Thyroid gland (tissue), 4 donors: ENCODE measurements at regions of chr17 and their contacts with region 1.

Region 1: GRCh38 chr17:879549-880442 is 97.6 kb downstream of the MRM3 start:
- DNase-seq: peak; percentile 95 to 97
- H3K4me3 ChIP-seq: no peak overlapping the region
- H3K27ac ChIP-seq: peak overlapping the region; percentile 10 to 84 (median 59)
- H3K4me1 ChIP-seq: peaks cover 6 to 36% of the 10 kb centered on the region in 2 donors
- H3K27me3 ChIP-seq: no peaks in the 10 kb centered on the region
- CTCF ChIP-seq: peak; percentile 36 to 82 (median 70)
- POLR2A ChIP-seq: no peak

Region 2: DNA sequence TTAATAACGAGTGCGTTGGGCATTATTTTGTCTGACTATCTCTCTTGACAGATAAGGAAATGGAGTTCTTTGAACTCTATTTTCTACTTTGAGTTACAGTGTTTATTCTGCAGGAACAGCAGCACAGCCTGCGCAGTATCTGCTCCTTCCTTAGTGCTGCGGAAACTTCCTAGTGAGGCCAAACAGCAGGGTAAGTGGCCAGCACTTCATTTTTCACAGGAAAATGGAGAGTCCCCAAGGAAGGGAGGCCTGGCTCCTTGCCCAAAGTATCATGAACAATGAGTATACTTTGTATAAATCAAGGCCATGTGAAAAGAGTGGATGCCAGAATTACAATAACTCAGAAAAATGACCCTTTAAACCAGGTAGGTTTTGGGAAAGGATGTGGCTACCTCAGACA is 305.7 kb before region 1 on chr17:
- intact Hi-C with region 1: no loop called
- DNase-seq: peak; percentile 9 to 19
- H3K4me3 ChIP-seq: no peak overlapping the region
- H3K27ac ChIP-seq: peak overlapping the region; percentile 13 to 44 (median 19)
- H3K4me1 ChIP-seq: peaks cover 5 to 25% of the 10 kb centered on the region in 2 donors
- H3K27me3 ChIP-seq: no peaks in the 10 kb centered on the region
- CTCF ChIP-seq: no peak
- POLR2A ChIP-seq: no peak

Region 3: DNA sequence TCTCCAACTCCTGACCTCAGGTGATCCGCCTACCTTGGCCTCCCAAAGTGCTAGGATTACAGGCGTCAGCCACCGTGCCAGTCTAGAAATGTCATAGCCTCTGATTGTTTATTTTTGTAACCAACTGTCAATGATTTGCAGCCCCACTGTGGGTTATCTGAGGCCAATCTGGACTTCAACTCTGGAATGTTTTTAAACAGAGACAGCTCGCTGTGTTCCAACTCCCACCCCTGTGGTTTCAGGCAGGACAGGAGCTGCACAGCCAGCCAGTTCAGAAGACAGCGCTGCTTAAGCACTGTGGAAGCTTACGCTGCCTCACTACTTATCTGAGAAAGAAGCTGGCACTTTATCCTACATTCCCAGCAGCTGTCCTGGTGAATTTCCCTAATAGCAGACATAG is 78.1 kb before region 1 on chr17:
- intact Hi-C with region 1: loop called (anchors 10 kb)
- DNase-seq: no peak
- H3K4me3 ChIP-seq: no peak overlapping the region
- H3K27ac ChIP-seq: no peak overlapping the region
- H3K4me1 ChIP-seq: no peaks in the 10 kb centered on the region
- H3K27me3 ChIP-seq: no peaks in the 10 kb centered on the region
- CTCF ChIP-seq: no peak
- POLR2A ChIP-seq: no peak

Region 4: GRCh38 chr17:823501-823902 is 56.3 kb before region 1 on chr17:
- intact Hi-C with region 1: no loop called
- DNase-seq: no peak
- H3K4me3 ChIP-seq: no peak overlapping the region
- H3K27ac ChIP-seq: no peak overlapping the region
- H3K4me1 ChIP-seq: no peaks in the 10 kb centered on the region
- H3K27me3 ChIP-seq: no peaks in the 10 kb centered on the region
- CTCF ChIP-seq: no peak
- POLR2A ChIP-seq: no peak

Region 5: DNA sequence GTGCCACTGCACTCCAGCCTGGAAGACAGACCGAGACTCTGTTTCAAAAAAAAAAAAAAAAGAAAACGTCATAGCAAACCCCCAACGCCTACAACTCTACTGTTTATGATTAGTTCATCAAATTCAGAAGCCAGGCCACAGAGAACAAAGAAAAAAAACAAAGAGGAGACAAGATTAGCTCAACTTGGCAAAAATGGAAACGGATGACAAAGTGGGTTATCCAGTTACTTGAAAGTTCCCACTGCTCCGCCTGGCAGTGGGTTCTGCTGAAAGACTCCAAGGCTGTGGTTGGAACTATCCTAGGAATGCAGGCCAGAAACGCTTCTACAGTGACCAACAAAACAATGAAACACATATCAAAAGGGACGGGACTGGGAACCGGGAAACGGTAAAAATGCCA is 44.5 kb before region 1 on chr17:
- intact Hi-C with region 1: no loop called
- DNase-seq: no peak
- H3K4me3 ChIP-seq: no peak overlapping the region
- H3K27ac ChIP-seq: no peak overlapping the region
- H3K4me1 ChIP-seq: no peaks in the 10 kb centered on the region
- H3K27me3 ChIP-seq: no peaks in the 10 kb centered on the region
- CTCF ChIP-seq: no peak
- POLR2A ChIP-seq: no peak

Region 6: DNA sequence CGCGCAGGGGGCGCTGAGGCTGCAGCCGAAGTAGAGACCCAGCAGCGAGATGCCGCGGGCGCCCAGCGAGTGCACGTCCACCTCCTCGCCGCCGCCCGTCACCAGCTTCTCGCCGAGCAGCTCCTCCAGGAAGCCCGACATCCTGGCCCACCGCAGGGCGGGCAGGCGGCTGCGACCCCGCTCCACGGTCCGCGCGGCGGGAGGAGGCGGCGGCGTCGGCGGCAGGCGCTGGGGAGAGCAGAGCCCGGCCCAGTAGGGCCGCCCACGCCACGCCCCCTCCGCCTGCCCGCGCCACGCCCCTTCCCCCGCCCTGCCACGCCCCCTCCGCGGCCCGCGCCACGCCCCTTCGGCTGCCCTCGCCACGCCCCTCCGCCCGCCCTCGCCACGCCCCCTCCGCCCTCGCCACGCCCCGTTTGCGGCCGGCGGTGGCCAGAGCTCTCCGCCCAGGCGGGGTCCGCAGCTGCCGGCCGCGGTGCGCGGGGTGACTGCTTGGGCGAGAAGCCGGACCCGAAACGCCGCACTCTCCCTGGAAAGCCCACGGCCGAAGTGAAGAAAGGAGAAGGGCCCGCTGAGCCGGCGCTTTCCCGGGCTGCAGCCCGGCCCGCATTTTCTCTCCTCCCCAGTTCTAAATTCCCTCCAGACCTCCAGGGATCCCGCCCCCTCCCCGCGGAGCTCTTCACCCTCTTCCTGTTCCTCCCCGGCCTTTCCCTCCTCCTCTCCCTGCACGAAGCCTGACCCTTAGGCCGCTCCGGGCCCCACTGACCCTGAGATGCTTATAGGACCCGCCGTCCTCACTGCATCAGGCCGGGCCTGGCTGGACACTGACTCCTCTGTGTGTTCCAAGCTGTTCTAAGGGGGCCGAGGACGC is 100.0 kb after region 1 on chr17 and contains the start of gene NXN:
- intact Hi-C with region 1: loop called (anchors 5 kb)
- DNase-seq: peak; percentile 78 to 79
- H3K4me3 ChIP-seq: peak within 1 kb of the TSS in 2 of 3 donors; percentile 47 to 61
- H3K27ac ChIP-seq: peak within 1 kb of the TSS; percentile 76 to 81 (median 79)
- H3K4me1 ChIP-seq: peaks cover 18 to 22% of the 10 kb centered on the region in 2 donors
- H3K27me3 ChIP-seq: no peaks in the 10 kb centered on the region
- CTCF ChIP-seq: peak in 3 of 6 experiments; percentile 21 to 31 (median 24)
- POLR2A ChIP-seq: peak in 1 of 2 donors; percentile 88
- total RNA-seq, gene NXN: 14.5 to 18.3 (median 17.2) TPM